Adrenal gland (tissue), 19 donors: ENCODE measurements at regions of chr4 and their contacts with region 1.

Region 1: DNA sequence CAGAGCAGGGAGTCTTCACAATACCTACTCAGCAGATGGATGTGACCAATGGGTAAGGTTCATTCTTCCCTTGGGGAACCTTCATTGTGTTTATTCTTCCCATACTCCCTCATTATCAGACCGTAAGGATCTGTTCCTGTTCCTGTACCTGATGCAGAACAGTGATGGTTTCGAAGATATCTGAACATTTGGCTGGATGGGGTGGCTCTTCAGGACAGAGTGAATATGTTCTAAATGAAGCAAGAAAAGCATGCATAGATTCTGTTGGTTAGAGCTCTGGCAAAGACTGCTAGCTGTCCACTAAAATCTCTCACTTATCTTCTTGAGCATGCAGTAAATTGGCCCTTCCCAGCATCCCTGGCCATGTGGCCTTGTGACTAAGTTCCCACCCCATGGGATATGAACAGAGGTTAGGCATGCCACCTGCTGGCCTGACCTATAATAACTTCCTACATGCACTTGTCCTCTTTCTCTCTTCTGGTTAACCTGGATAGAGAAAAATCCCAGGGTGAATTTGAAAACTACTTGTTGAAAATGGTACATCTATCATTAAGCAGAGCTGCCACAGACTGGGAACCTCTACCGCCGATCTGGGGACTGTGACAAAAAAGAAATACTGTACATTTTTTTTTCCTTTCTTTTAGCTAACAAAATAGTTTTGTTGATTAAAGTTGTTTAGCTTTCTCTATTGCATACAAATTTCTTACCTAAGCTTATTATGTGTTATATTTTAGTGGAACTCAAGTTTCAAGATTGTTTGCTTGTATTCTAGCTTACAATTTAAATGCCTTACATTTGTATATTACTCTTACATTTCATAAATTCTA is 60.0 kb upstream of the BANK1 start:
- DNase-seq: peak; percentile 64 to 90 (median 80)
- H3K4me3 ChIP-seq: no peak overlapping the region
- H3K27ac ChIP-seq: no peak overlapping the region
- H3K4me1 ChIP-seq: no peaks in the 10 kb centered on the region
- H3K27me3 ChIP-seq: no peaks in the 10 kb centered on the region
- CTCF ChIP-seq: peak; percentile 58 to 80 (median 78)
- POLR2A ChIP-seq: no peak

Region 2: GRCh38 chr4:100093091-100093866 is 1637.2 kb before region 1 on chr4:
- intact Hi-C with region 1: loop called in 1 of 2 experiments (anchors 5 kb)
- DNase-seq: peak; percentile 72 to 93 (median 84)
- H3K4me3 ChIP-seq: no peak overlapping the region
- H3K27ac ChIP-seq: peak overlapping the region in 1 of 5 donors; percentile 40
- H3K4me1 ChIP-seq: peaks cover 0 to 9% of the 10 kb centered on the region in 2 donors
- H3K27me3 ChIP-seq: no peaks in the 10 kb centered on the region
- CTCF ChIP-seq: peak; percentile 55 to 81 (median 76)
- POLR2A ChIP-seq: no peak

Region 3: DNA sequence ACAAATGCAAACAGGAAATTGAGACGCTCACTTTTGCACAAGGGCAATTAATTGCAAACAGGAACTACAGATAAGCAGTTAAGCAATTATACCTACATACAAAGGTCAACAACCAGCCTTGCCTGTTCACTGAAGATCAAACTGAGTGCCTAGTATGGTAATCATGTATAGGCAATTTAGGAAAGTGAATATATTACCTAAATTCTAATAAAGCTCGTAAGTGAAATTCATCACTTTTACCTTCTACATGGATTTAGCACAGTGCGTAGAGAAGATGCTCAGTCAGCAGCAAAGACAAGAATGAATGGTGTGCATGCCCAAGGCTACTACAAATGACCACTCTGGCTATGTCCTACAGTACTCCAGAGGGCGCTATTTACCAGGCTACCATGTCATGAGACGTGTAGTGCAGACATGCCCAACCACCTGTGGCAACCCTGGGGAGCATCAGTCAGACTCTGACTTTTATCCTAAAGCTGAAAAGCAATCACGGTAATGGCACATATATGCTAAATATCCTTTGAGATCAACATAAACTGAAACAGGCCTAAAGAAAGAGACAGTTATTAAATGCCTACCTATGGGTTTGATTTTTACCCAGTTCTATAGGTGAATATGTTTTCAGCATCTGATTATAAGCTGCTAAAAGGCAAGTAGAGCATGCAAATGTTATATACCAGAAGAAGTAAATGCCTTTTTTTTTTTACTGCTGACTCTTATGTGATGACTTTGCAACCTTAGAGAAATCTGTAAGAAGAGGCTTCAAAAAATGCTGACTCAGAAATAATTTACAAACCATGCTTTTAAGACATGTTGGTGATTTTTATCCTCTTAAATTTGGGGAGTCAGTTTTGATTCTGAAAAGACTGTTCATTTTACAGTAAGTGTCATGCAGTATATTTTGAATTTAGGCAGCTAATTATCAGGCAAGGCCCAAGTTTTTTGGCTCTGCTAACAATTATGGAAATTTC is 561.2 kb before region 1 on chr4:
- intact Hi-C with region 1: loop called in 1 of 2 experiments (anchors 5 kb)
- DNase-seq: peak; percentile 68 to 89 (median 74)
- H3K4me3 ChIP-seq: no peak overlapping the region
- H3K27ac ChIP-seq: no peak overlapping the region
- H3K4me1 ChIP-seq: peaks cover 0 to 12% of the 10 kb centered on the region in 2 donors
- H3K27me3 ChIP-seq: no peaks in the 10 kb centered on the region
- CTCF ChIP-seq: peak; percentile 51 to 88 (median 82)
- POLR2A ChIP-seq: no peak